Activated naive CD4-positive, alpha-beta T cell treated with anti-CD3 and anti-CD28 coated beads for 36 hours (primary cell): ENCODE measurements at regions of chr15 and their contacts with region 1.

Region 1: DNA sequence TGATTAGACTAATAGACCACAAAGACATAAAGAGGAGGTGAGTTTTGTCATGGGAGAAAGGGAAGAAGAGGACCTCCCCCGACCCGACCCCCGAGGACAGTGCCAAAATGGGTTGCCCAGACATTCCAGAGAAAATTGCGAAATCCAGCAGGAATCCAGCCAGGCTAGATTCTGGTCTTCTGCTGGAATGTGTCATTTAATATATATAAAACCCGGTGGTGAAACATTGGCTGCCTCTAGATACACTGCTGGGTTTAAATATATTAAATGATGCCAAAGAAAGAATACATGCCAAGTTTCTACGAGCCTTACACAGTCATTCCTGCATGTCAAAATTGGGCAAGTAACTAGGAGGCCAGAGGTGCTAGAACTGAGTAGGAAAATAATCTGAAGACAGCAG is 45.3 kb upstream of the SPESP1 start:
- DNase-seq: no peak
- H3K4me3 Mint-ChIP-seq: no peak overlapping the region
- H3K27ac Mint-ChIP-seq: no peak overlapping the region
- H3K4me1 Mint-ChIP-seq: no peaks in the 10 kb centered on the region
- H3K27me3 Mint-ChIP-seq: no peaks in the 10 kb centered on the region

Region 2: GRCh38 chr15:68924866-68925560 is 39.9 kb after region 1 on chr15:
- CTCF ChIA-PET with region 1: interaction called, 11 read pairs
- intact Hi-C with region 1: no loop called
- DNase-seq: peak; percentile 85
- H3K4me3 Mint-ChIP-seq: no peak overlapping the region
- H3K27ac Mint-ChIP-seq: no peak overlapping the region
- H3K4me1 Mint-ChIP-seq: no peaks in the 10 kb centered on the region
- H3K27me3 Mint-ChIP-seq: peaks cover 24% of the 10 kb centered on the region